WTC11 (cell line): ENCODE measurements at regions of chr5 and their contacts with region 1.

Region 1: DNA sequence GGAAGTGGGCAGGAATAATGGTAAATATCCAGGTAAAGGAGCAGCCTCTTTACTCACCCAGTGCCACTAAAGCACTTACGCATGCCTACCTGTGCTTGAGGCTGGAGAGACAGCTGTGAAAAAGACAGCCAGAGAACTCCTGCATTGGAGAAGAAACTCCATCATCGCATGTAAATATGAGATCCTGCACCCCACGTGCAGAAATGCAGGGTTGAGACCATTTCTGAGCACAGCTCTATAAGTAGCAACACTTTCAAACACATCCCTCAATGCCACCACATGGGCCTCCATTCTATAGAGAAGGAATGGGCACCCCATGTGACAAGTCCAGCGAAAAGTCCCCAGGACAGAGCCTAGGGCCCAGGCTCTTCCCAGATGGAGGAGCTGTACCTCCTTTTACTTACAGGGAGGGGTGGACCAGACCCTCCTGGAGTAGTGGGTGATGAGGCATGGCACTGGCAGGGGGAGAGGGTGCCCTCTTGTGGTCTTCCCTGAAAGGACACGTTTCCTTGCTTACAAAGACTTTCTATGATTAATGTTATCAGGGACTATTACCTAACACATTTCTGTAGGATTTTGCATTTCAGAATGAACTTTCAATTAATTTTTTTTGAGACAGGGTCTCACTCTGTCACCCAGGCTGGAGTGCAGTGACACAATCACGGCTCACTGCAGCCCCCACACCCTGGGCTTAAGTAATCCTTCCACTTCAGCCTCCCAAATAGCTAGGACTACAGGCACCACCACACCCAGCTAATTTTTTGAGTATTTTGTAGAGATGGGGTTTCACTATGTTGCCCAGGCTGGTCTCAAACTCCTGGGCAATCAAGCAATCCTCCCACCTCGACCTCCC is 55.3 kb upstream of the IL17B start:
- DNase-seq: peak; percentile 82
- ATAC-seq: peak; percentile 84
- H3K4me3 Mint-ChIP-seq: no peak overlapping the region
- H3K27ac Mint-ChIP-seq: no peak overlapping the region
- H3K4me1 Mint-ChIP-seq: peaks cover 30% of the 10 kb centered on the region
- H3K27me3 Mint-ChIP-seq: no peaks in the 10 kb centered on the region
- CTCF ChIP-seq: peak; percentile 67

Region 2: GRCh38 chr5:149345147-149345875 is 89.1 kb before region 1 on chr5 and contains the start of gene GRPEL2:
- CTCF ChIA-PET with region 1: interaction called, 11 read pairs
- POLR2A ChIA-PET with region 1: no interaction called
- DNase-seq: peak; percentile 94
- ATAC-seq: peak; percentile 97
- H3K4me3 Mint-ChIP-seq: peak within 1 kb of the TSS; percentile 89
- H3K27ac Mint-ChIP-seq: peak within 1 kb of the TSS; percentile 90
- H3K4me1 Mint-ChIP-seq: peaks cover 20% of the 10 kb centered on the region
- H3K27me3 Mint-ChIP-seq: peaks cover 13% of the 10 kb centered on the region
- CTCF ChIP-seq: no peak
- total RNA-seq, gene GRPEL2: 35.3 to 48.6 TPM (median 35.5 TPM) in 3 replicates

Region 3: DNA sequence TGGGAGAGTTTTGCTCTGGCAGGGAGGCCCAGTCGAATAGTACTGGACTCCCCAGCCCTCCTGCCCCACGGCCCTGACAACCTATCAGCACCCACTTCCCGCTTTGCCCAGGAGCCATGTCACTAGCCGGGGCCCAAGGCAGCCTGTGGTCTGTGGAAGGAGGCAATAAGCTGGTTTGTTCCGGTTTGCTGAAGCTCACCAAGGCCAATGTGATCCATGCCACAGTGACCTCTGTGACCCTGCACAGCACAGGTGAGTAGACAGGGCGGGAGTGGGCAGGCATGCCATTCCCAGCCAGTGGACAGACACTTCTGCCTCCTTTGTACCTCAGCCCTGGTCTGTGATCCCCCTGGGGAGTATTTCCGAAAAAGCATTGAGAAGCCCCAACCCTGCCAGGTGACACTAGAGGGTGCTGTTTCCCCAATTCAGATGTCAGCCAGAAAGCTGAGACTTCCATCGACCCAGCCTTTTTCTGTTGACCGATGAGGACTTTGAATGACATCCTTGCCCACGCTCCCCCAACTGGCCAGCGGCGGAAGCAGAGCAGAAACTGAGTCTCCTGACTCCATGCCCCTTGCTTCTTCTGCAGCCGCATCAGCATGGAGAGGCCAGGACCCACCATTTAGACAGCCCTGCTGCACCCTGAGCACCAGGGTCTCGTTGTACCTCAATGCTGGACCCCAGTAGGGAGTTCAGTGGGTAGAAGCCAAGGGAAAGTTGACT is 67.0 kb before region 1 on chr5:
- CTCF ChIA-PET with region 1: interaction called, 146 read pairs
- POLR2A ChIA-PET with region 1: no interaction called
- DNase-seq: peak; percentile 87
- ATAC-seq: peak; percentile 85
- H3K4me3 Mint-ChIP-seq: no peak overlapping the region
- H3K27ac Mint-ChIP-seq: no peak overlapping the region
- H3K4me1 Mint-ChIP-seq: peaks cover 15% of the 10 kb centered on the region
- H3K27me3 Mint-ChIP-seq: no peaks in the 10 kb centered on the region
- CTCF ChIP-seq: peak; percentile 65; the same call in 1 of the 2 replicates

Region 4: GRCh38 chr5:149381987-149382340 is 52.4 kb before region 1 on chr5:
- CTCF ChIA-PET with region 1: interaction called, 110 read pairs
- POLR2A ChIA-PET with region 1: no interaction called
- DNase-seq: peak; percentile 93
- ATAC-seq: peak; percentile 91
- H3K4me3 Mint-ChIP-seq: no peak overlapping the region
- H3K27ac Mint-ChIP-seq: no peak overlapping the region
- H3K4me1 Mint-ChIP-seq: peaks cover 12% of the 10 kb centered on the region
- H3K27me3 Mint-ChIP-seq: no peaks in the 10 kb centered on the region
- CTCF ChIP-seq: peak; percentile 92

Region 5: GRCh38 chr5:149406203-149406978 is 28.0 kb before region 1 on chr5:
- CTCF ChIA-PET with region 1: interaction called, 45 read pairs
- POLR2A ChIA-PET with region 1: no interaction called
- DNase-seq: peak; percentile 41
- ATAC-seq: peak; percentile 62
- H3K4me3 Mint-ChIP-seq: no peak overlapping the region
- H3K27ac Mint-ChIP-seq: 0 out of 2 replicates have a peak overlapping the region, but pooled peaks have one; percentile 60
- H3K4me1 Mint-ChIP-seq: peaks cover 43% of the 10 kb centered on the region
- H3K27me3 Mint-ChIP-seq: no peaks in the 10 kb centered on the region; the same call in 1 of the 2 replicates
- CTCF ChIP-seq: no peak

Region 6: GRCh38 chr5:149551200-149552037 is 117.0 kb after region 1 on chr5 and contains the start of gene CSNK1A1:
- CTCF ChIA-PET with region 1: interaction called, 19 read pairs
- POLR2A ChIA-PET with region 1: no interaction called
- DNase-seq: peak; percentile 98
- ATAC-seq: peak; percentile 90
- H3K4me3 Mint-ChIP-seq: peak within 1 kb of the TSS; percentile 98
- H3K27ac Mint-ChIP-seq: peak within 1 kb of the TSS; percentile 99
- H3K4me1 Mint-ChIP-seq: peaks cover 33% of the 10 kb centered on the region
- H3K27me3 Mint-ChIP-seq: no peaks in the 10 kb centered on the region
- CTCF ChIP-seq: peak; percentile 47
- total RNA-seq, gene CSNK1A1: 265 to 276 TPM (median 269 TPM) in 3 replicates

Region 7: GRCh38 chr5:149618581-149619251 is 184.3 kb after region 1 on chr5:
- CTCF ChIA-PET with region 1: interaction called, 14 read pairs
- POLR2A ChIA-PET with region 1: no interaction called
- DNase-seq: peak; percentile 58
- ATAC-seq: peak; percentile 92
- H3K4me3 Mint-ChIP-seq: no peak overlapping the region
- H3K27ac Mint-ChIP-seq: no peak overlapping the region
- H3K4me1 Mint-ChIP-seq: peaks cover 10% of the 10 kb centered on the region
- H3K27me3 Mint-ChIP-seq: no peaks in the 10 kb centered on the region
- CTCF ChIP-seq: peak; percentile 64

Region 8: GRCh38 chr5:149641000-149641576 is 206.7 kb after region 1 on chr5:
- CTCF ChIA-PET with region 1: no interaction called
- POLR2A ChIA-PET with region 1: no interaction called
- DNase-seq: no peak
- ATAC-seq: no peak
- H3K4me3 Mint-ChIP-seq: no peak overlapping the region
- H3K27ac Mint-ChIP-seq: no peak overlapping the region
- H3K4me1 Mint-ChIP-seq: peaks cover 4% of the 10 kb centered on the region; the same call in 1 of the 2 replicates
- H3K27me3 Mint-ChIP-seq: no peaks in the 10 kb centered on the region
- CTCF ChIP-seq: no peak